Activated CD8-positive, alpha-beta T cell treated with anti-CD3 and anti-CD28 coated beads for 36 hours (primary cell): ENCODE measurements at regions of chr3 and their contacts with region 1.

Region 1: DNA sequence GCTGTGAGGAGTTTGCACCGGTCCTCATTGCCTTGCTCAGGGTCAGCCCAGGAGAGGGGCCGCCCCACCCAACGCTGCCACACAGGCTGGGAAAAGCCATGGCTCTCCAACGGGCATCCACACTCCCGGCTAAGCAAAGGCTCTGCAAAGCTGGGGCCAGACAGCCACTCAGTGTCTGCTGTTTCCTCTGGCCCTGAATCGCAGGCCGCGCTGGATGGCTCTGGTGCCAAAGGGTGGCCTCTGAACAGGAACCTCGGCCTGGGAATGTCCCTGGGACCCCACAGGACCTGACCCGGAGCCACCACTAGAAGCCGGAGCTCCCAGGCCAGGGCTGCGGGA is 42.9 kb downstream of the RPN1 start:
- DNase-seq: no peak
- ATAC-seq: no peak
- H3K4me3 Mint-ChIP-seq: no peak overlapping the region
- H3K27ac Mint-ChIP-seq: no peak overlapping the region
- H3K4me1 Mint-ChIP-seq: no peaks in the 10 kb centered on the region
- H3K27me3 Mint-ChIP-seq: peaks cover 3% of the 10 kb centered on the region
- CTCF ChIP-seq: no peak

Region 2: DNA sequence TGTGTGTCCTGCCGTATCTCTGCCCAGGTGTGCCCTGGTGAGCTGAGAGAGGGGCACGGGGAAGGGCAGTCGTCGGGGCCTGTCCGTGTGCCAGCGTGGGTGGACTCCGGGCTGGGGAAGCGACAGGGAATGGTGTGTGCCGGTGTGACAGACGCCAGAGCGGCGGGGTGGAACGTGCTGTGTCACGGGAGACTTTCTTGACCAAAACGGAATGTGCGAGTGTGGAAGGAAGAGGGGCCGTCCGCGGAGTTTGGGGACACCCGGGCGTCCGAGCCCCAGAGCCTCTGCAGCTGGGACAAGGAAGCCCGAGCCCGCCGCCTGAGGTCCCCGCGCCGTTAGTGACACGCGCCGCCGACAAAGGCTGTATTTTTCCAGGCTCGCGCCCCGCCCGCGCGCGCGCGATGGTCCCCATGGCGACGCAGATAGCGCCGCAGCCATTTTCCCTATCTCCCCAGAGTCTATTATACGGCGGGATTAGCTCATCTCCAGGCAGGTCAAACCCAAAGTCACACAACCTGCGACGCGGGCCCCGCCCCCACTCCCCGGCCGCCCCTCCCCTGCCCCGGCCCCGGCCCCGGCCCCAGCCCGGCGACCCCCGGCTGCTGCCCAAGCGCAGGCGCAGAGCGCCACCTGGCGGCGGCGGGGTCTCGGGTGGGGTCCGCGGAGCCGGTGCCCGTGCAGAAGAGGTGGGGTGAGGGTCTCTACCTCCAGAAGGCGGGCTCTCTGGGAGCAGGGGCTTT is 110.1 kb before region 1 on chr3:
- CTCF ChIA-PET with region 1: interaction called, 4 read pairs
- POLR2A ChIA-PET with region 1: no interaction called
- intact Hi-C with region 1: loop called (anchors 10 kb)
- DNase-seq: peak; percentile 81
- ATAC-seq: peak; percentile 70
- H3K4me3 Mint-ChIP-seq: peak overlapping the region; percentile 66
- H3K27ac Mint-ChIP-seq: no peak overlapping the region
- H3K4me1 Mint-ChIP-seq: no peaks in the 10 kb centered on the region
- H3K27me3 Mint-ChIP-seq: peaks cover 45% of the 10 kb centered on the region
- CTCF ChIP-seq: peak; percentile 98

Region 3: DNA sequence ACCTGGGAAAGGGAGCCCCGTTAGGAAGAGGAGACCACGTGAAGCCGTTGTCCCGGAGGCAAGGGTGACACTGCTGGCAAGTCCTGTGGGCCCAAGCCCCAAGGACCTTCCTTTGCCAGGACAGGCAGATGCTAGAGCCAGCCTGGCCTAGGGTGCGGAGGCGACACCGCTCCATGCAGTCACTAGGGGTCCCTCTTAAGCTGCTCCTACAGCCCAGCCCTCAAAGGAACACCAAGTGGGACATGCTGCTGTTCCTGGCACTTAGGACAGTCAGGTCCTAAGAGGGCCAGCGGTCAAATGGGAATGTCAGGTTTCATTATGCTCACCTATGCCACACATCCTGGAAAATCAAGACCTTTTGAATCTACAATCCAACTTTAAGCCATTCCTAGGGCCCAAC is 16.7 kb before region 1 on chr3:
- CTCF ChIA-PET with region 1: interaction called, 24 read pairs
- POLR2A ChIA-PET with region 1: interaction called, 4 read pairs
- intact Hi-C with region 1: no loop called
- DNase-seq: no peak
- ATAC-seq: no peak
- H3K4me3 Mint-ChIP-seq: no peak overlapping the region
- H3K27ac Mint-ChIP-seq: no peak overlapping the region
- H3K4me1 Mint-ChIP-seq: peaks cover 3% of the 10 kb centered on the region
- H3K27me3 Mint-ChIP-seq: peaks cover 2% of the 10 kb centered on the region
- CTCF ChIP-seq: no peak

Region 4: DNA sequence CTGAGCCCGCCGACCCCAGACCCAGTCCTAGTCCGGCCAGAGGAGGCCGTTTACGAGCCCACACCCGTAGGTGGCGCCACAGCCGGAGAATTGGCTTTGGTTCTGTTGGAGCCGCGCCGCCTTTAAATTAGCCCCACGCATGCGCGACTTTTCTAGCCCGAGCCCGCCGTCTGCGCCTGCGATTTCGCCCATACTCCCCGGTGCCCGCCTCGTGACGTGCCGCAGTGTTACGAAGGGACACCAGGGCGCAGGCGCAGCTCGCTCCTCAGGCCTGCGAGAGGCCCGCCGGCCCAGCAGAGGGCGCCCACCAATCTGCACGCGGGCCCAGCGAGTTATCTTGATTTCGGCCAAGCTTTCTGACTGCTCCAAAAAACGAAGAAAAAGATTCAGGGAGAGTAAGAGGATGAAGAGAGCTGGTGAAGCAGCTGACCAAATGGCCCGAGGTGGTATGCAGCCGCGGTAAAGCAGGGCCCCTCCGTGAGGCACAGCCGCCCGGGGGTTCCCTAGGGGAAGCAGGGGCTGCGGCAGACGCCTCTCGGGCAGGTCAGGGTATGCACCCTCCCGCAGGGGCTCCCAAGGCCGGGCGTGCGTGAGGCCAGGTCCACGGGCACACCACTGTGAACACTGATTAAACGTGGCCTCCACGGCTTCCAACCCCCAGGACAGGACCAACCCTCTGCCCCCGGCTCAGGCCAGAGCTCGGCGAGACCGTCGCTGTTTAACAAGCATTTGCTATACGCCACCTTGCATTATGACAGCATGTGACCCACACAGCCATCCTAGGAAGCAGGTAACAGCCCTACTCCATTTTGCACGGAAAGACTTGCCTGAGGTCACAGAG is 10.1 kb after region 1 on chr3:
- CTCF ChIA-PET with region 1: interaction called, 38 read pairs
- POLR2A ChIA-PET with region 1: interaction called, 4 read pairs
- intact Hi-C with region 1: no loop called
- DNase-seq: peak; percentile 99
- ATAC-seq: peak; percentile 90
- H3K4me3 Mint-ChIP-seq: peak overlapping the region; percentile 95
- H3K27ac Mint-ChIP-seq: peak overlapping the region; percentile 94
- H3K4me1 Mint-ChIP-seq: peaks cover 29% of the 10 kb centered on the region
- H3K27me3 Mint-ChIP-seq: no peaks in the 10 kb centered on the region
- CTCF ChIP-seq: peak; percentile 92